ENCODE measurements at regions of chr3 and their contacts with region 1.

Region 1: GRCh38 chr3:157618075-157618760 is 115.0 kb upstream of the VEPH1 start:
- DNase-seq: peak; percentile 71
- ATAC-seq: peak; percentile 86
- H3K4me3 ChIP-seq: no peak overlapping the region
- H3K27ac ChIP-seq: no peak overlapping the region
- H3K4me1 ChIP-seq: no peaks in the 10 kb centered on the region
- H3K27me3 ChIP-seq: peaks cover 12% of the 10 kb centered on the region
- CTCF ChIP-seq: peak; percentile 68
- POLR2A ChIP-seq: no peak
- RAD21 ChIP-seq: peak; percentile 63

Region 2: DNA sequence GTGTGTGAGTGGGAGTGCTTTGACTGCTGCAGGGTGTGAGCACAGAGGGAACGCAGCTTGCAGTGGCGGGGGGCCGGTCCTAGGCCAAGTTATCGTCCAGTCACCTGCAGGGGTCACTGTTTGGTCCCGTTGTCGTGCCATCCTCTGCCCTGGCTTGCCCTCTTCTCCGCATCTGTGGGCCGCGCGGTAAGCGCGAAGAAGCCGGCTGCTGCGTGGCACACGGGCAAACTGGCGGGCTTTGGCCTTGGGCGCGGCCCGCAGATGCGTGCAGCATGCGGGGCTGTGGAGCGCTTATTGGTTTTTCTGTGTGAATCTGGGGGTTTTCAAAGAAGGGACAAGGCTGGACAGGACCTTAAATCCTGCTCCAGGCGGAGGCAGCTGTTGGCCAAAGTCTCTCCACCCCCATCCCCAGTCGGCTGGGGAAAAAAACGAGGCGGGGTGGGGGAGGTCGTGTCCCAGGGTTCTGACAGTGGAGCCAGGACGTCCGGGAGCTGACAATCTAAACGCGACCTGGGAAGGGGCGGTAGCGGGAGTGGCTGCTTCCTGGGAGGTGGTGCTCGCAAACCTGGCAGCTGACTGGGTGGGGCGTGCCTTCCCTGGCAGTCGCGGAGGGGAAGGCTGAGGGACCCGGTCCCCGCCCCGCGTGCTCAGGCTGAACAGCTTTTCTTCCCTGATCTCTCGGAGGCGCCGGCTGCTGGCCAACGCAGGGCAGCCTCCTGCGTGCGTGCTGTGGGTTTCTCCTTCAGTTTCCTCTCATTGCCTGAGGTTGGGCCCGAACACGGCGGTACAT is 75.3 kb before region 1 on chr3:
- CTCF ChIA-PET with region 1: no interaction called
- POLR2A ChIA-PET with region 1: no interaction called
- dilution Hi-C with region 1: no loop called
- in situ Hi-C with region 1: no loop called
- intact Hi-C with region 1: no loop called
- DNase-seq: peak; percentile 45
- ATAC-seq: peak; percentile 85
- H3K4me3 ChIP-seq: peak overlapping the region; percentile 43
- H3K27ac ChIP-seq: no peak overlapping the region
- H3K4me1 ChIP-seq: peaks cover 3% of the 10 kb centered on the region; the same call in 1 of the 2 replicates
- H3K27me3 ChIP-seq: no peaks in the 10 kb centered on the region
- CTCF ChIP-seq: peak; percentile 25; the same call in 1 of the 2 replicates
- POLR2A ChIP-seq: no peak
- RAD21 ChIP-seq: no peak

Region 3: DNA sequence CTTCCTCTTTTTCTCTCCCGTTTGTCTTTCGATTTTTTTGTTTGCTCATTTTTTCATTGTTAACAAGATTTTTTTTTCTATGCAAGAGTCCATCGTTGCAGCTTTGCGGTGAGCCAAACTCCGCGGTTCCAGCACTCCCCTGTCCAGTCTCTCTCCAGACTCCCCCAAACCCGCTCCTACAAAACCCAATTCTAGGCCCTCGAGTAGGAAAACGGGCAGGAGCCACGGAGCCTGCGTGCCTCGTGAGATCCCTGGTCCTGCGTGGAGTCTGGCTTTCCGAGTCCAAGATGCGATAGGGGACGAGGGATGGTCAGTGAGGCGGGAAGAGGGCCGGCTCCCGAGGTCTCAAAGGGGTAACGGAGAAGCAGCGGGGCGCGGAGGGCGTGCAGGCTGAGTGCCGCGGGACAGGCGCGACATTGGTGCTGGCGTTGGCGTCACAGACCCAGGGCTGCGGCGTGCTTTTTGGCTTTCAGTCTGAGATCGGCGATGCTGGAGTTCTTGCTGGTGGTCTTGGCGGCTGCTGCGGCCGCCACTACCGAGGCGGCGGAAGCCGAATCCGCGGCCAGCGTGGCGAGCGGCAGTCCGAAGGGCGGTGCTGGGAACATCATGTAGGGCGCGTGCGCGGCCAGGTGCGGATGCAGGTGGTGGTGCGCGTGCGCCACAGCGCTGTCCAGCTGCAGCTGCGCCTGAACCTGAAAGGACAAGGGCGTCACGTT is 479.5 kb after region 1 on chr3:
- CTCF ChIA-PET with region 1: no interaction called
- POLR2A ChIA-PET with region 1: no interaction called
- dilution Hi-C with region 1: no loop called
- in situ Hi-C with region 1: no loop called
- intact Hi-C with region 1: loop called (anchors 5 kb)
- DNase-seq: peak; percentile 57
- ATAC-seq: peak; percentile 71
- H3K4me3 ChIP-seq: peak overlapping the region; percentile 56
- H3K27ac ChIP-seq: no peak overlapping the region
- H3K4me1 ChIP-seq: peaks cover 2% of the 10 kb centered on the region; the same call in 1 of the 2 replicates
- H3K27me3 ChIP-seq: peaks cover 64% of the 10 kb centered on the region
- CTCF ChIP-seq: no peak
- POLR2A ChIP-seq: no peak
- RAD21 ChIP-seq: no peak

Region 4: DNA sequence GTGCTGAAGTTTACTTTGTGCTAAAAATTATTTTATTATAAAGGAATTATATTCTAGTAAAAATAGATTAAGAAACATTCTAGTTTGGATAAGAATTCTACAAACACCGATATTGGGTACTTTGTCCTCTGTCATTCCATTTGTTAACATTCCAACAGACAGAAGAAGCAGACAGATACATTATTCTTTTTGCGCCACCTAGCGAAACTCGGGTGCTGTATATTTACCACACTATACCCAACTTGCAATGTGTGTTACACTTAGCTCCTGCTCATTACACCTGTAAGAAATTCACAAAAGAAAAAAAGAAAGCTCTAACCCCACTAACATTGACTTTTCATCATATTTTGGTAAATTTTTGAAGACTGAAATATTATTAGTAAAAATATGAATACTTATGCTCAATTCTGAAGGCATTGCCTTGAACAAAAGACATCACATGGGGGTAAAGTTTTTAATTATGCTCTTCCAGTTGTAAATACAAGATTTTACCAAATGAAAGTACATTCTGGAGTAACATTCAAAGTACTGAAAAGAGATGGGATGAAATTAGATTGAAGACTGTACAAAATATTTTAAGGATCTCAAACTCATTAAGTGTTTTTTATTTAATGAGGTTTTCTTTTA is 816.3 kb after region 1 on chr3:
- CTCF ChIA-PET with region 1: interaction called, 5 read pairs
- POLR2A ChIA-PET with region 1: no interaction called
- dilution Hi-C with region 1: no loop called
- in situ Hi-C with region 1: loop called (anchors 10 kb)
- intact Hi-C with region 1: loop called (anchors 1 kb)
- DNase-seq: peak; percentile 60
- ATAC-seq: peak; percentile 79
- H3K4me3 ChIP-seq: no peak overlapping the region
- H3K27ac ChIP-seq: no peak overlapping the region
- H3K4me1 ChIP-seq: no peaks in the 10 kb centered on the region
- H3K27me3 ChIP-seq: no peaks in the 10 kb centered on the region
- CTCF ChIP-seq: peak; percentile 78
- POLR2A ChIP-seq: no peak
- RAD21 ChIP-seq: peak; percentile 74

Region 5: DNA sequence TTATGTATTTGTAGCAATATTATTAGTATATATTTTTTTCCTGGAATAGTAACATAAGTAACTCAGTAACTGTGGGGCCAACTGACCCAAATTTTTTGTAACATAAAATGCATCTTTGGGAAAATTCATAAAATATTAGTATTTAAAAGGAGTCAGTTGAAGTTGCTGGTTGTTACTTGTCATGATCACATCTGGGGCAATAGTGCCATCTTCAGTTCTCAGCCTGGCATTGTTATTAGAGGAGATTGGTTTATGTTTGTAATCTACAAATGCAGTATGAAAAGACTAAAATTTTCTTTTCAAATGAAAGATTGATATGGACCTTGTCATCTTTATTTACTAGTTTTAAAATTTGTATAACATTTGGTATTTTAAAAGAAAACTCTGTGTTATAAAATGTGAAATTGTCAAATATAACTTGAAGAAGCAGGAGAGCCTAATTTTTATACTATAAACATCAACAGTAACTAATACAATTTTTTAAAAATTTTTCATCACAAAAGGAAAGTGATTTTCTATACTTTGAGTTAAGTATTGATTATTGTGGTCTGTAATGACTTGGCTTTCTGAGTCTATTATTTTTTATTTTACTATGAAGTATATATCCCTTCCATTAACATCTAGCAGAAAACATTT is 914.0 kb after region 1 on chr3:
- CTCF ChIA-PET with region 1: no interaction called
- POLR2A ChIA-PET with region 1: no interaction called
- dilution Hi-C with region 1: no loop called
- in situ Hi-C with region 1: loop called (anchors 10 kb)
- intact Hi-C with region 1: loop called (anchors 1 kb)
- DNase-seq: peak; percentile 70
- ATAC-seq: peak; percentile 54
- H3K4me3 ChIP-seq: no peak overlapping the region
- H3K27ac ChIP-seq: no peak overlapping the region
- H3K4me1 ChIP-seq: no peaks in the 10 kb centered on the region
- H3K27me3 ChIP-seq: no peaks in the 10 kb centered on the region
- CTCF ChIP-seq: peak; percentile 70
- POLR2A ChIP-seq: no peak
- RAD21 ChIP-seq: peak; percentile 80